Caco-2 (cell line): ENCODE measurements at regions of chr14 and their contacts with region 1.

Region 1: DNA sequence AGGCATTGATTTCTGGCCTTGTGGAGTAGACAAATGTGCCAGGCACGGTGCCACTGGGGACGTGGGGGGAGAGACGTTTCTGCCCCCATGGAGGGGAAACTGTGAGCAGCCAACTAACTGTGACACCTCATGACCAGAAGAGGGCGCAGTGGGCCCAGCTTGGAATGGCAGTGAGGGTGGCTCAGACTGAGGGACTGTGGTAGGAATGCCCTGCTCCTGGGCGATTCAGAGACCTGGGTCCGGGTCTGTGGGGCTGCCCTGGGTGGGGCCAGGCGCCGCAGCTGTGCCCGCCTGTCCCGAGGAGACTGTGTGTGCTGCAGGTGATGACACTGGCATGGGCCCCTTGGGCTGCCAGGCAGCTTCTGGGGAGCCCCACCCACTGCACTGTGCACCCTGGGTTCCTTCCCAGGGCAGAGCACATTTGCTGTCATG is 60.6 kb downstream of the SLC25A47 start:
- DNase-seq: peak; percentile 56 to 70
- H3K4me3 ChIP-seq: no peak overlapping the region
- H3K4me3 Mint-ChIP-seq: no peak overlapping the region
- H3K27ac Mint-ChIP-seq: no peak overlapping the region
- H3K4me1 ChIP-seq: 0 out of 2 replicates have a peak, but pooled peaks cover 8% of the 10 kb centered on the region
- H3K4me1 Mint-ChIP-seq: no peaks in the 10 kb centered on the region
- H3K27me3 ChIP-seq: no peaks in the 10 kb centered on the region
- H3K27me3 Mint-ChIP-seq: no peaks in the 10 kb centered on the region
- CTCF ChIP-seq: peak; percentile 79 to 81

Region 2: DNA sequence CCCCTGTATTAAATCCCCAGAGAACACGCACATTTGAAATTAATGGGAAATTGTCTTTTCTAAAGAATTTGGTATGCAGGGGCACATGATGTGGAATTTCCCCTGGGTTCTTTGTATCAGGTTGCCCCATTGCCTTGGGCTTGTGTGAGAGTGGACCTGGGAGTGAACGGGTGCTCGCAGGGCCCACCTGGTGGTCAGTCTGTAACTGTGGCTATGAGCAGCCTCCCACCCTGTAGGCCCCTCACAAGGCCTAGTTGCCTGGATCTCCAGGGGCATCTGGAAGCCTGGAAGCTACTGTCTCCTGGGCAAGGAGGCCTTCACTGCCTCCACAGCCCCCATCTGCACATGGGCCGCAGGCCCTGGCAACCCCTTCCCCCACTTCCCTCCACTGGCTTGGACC is 36.1 kb after region 1 on chr14:
- CTCF ChIA-PET with region 1: interaction called, 4 read pairs
- POLR2A ChIA-PET with region 1: no interaction called
- intact Hi-C with region 1: loop called (anchors 1 kb)
- DNase-seq: peak in 1 of 2 experiments; percentile 38
- H3K4me3 ChIP-seq: no peak overlapping the region
- H3K4me3 Mint-ChIP-seq: no peak overlapping the region
- H3K27ac Mint-ChIP-seq: no peak overlapping the region
- H3K4me1 ChIP-seq: no peaks in the 10 kb centered on the region
- H3K4me1 Mint-ChIP-seq: peaks cover 7% of the 10 kb centered on the region
- H3K27me3 ChIP-seq: no peaks in the 10 kb centered on the region
- H3K27me3 Mint-ChIP-seq: no peaks in the 10 kb centered on the region
- CTCF ChIP-seq: peak in 1 of 2 experiments; percentile 59

Region 3: GRCh38 chr14:100434033-100434601 is 50.4 kb after region 1 on chr14:
- CTCF ChIA-PET with region 1: interaction called, 12 read pairs
- POLR2A ChIA-PET with region 1: no interaction called
- intact Hi-C with region 1: no loop called
- DNase-seq: no peak
- H3K4me3 ChIP-seq: no peak overlapping the region
- H3K4me3 Mint-ChIP-seq: no peak overlapping the region
- H3K27ac Mint-ChIP-seq: no peak overlapping the region
- H3K4me1 ChIP-seq: no peaks in the 10 kb centered on the region
- H3K4me1 Mint-ChIP-seq: peaks cover 5% of the 10 kb centered on the region
- H3K27me3 ChIP-seq: no peaks in the 10 kb centered on the region
- H3K27me3 Mint-ChIP-seq: no peaks in the 10 kb centered on the region
- CTCF ChIP-seq: no peak

Region 4: DNA sequence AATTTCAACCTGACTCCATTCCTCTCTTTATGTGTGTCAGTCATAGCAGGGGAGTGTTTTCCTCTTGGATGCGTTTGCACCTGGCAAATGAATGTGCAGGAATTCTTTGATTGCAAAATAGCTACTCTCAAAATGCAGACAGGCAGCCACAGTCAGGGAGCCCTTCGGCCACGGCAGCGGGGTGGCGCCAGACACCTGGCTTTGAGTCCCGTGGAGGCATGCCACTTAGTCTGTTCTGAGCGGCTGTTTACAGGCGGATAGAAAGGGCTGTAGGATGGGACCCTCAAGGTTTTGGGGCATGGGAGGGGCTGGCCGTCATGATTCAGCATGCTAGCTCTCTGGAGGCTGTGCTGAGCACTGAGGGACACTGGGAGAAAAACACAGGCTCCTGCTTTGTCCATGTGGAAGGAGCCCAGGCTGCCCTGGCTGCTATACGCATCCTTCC is 56.5 kb after region 1 on chr14:
- CTCF ChIA-PET with region 1: interaction called, 12 read pairs
- POLR2A ChIA-PET with region 1: no interaction called
- intact Hi-C with region 1: no loop called
- DNase-seq: peak; percentile 62 to 75
- H3K4me3 ChIP-seq: no peak overlapping the region
- H3K4me3 Mint-ChIP-seq: no peak overlapping the region
- H3K27ac Mint-ChIP-seq: no peak overlapping the region
- H3K4me1 ChIP-seq: no peaks in the 10 kb centered on the region
- H3K4me1 Mint-ChIP-seq: no peaks in the 10 kb centered on the region
- H3K27me3 ChIP-seq: no peaks in the 10 kb centered on the region
- H3K27me3 Mint-ChIP-seq: no peaks in the 10 kb centered on the region
- CTCF ChIP-seq: peak; percentile 42 to 88

Region 5: DNA sequence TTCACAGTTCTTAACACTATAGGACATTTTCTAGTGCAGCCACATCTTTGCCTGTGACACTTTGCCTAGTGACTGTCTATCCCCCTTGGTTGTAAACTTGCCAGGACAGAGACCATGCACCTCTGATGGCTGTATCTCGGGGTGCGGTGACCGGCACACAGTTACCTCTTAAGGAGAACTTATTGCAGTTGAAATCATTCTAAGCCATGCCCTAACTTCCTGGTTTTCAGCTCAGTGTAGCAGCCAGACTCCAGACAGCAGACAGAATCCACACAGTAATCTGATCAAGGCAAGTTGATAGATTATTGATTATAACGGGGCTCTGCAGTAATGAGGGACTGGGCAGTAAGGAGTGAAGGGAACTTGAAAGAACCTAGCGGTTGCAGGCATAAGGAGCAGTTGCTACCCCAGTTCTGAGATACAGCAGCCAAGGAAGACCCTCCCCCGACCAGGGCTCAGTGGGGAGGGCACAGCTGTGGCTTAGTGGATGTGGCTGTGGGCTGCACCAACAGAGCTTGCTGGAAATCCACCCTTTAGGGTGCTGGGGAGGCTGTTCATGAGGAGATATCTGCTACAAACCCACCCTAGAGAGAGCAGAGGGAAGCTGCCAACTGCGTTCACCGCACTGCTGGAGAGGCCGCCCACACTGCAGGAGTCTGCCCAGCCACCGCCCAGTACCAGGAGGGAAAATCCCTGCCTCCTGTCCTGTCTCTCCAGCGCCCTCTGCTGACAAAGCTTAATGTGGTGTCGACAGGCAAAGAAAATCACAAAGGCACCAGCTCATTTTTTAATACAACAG is 261.6 kb after region 1 on chr14:
- CTCF ChIA-PET with region 1: interaction called, 64 read pairs
- POLR2A ChIA-PET with region 1: no interaction called
- intact Hi-C with region 1: loop called (anchors 1 kb)
- DNase-seq: peak; percentile 78 to 86
- H3K4me3 ChIP-seq: no peak overlapping the region
- H3K4me3 Mint-ChIP-seq: no peak overlapping the region
- H3K27ac Mint-ChIP-seq: no peak overlapping the region
- H3K4me1 ChIP-seq: no peaks in the 10 kb centered on the region
- H3K4me1 Mint-ChIP-seq: no peaks in the 10 kb centered on the region
- H3K27me3 ChIP-seq: no peaks in the 10 kb centered on the region
- H3K27me3 Mint-ChIP-seq: peaks cover 11% of the 10 kb centered on the region
- CTCF ChIP-seq: peak; percentile 76 to 78

Region 6: GRCh38 chr14:100900837-100901390 is 517.2 kb after region 1 on chr14:
- CTCF ChIA-PET with region 1: interaction called, 5 read pairs
- POLR2A ChIA-PET with region 1: no interaction called
- intact Hi-C with region 1: loop called (anchors 10 kb)
- DNase-seq: peak; percentile 61 to 79
- H3K4me3 ChIP-seq: no peak overlapping the region
- H3K4me3 Mint-ChIP-seq: peak overlapping the region; percentile 65
- H3K27ac Mint-ChIP-seq: no peak overlapping the region
- H3K4me1 ChIP-seq: peaks cover 9% of the 10 kb centered on the region
- H3K4me1 Mint-ChIP-seq: no peaks in the 10 kb centered on the region
- H3K27me3 ChIP-seq: no peaks in the 10 kb centered on the region; the same call in 1 of the 2 replicates
- H3K27me3 Mint-ChIP-seq: peaks cover 16% of the 10 kb centered on the region
- CTCF ChIP-seq: peak; percentile 39 to 80

Region 7: DNA sequence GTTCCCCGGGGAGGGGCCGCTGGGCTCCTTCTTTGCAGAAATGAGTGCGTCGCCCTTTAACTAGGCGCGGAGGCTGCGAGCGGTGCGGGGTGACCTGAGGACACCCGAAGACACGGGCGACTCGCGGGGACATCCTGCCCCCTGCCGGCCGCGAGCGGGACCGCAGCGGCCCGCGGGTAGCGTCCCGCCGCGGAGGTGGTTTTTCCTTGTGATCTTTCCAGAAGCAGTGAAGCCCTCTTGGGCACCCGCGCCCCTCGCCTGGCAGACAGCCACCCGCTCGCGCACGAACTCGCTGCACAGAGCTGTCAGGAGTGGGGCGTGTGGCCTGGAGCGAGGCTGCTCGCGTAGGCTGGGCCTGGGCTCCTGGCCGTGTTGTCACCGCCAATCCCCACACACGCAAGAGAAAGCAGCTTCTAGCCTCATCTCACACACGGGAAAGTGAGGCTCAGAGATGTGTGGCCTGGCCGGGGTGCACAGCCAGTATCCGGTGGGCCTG is 1244.8 kb after region 1 on chr14:
- CTCF ChIA-PET with region 1: no interaction called
- POLR2A ChIA-PET with region 1: no interaction called
- intact Hi-C with region 1: loop called (anchors 10 kb)
- DNase-seq: peak; percentile 56 to 81
- H3K4me3 ChIP-seq: no peak overlapping the region
- H3K4me3 Mint-ChIP-seq: no peak overlapping the region
- H3K27ac Mint-ChIP-seq: no peak overlapping the region
- H3K4me1 ChIP-seq: no peaks in the 10 kb centered on the region
- H3K4me1 Mint-ChIP-seq: no peaks in the 10 kb centered on the region
- H3K27me3 ChIP-seq: no peaks in the 10 kb centered on the region
- H3K27me3 Mint-ChIP-seq: peaks cover 3% of the 10 kb centered on the region
- CTCF ChIP-seq: peak; percentile 86 to 98